ENCODE measurements at regions of chr11 and their contacts with region 1.

Region 1: DNA sequence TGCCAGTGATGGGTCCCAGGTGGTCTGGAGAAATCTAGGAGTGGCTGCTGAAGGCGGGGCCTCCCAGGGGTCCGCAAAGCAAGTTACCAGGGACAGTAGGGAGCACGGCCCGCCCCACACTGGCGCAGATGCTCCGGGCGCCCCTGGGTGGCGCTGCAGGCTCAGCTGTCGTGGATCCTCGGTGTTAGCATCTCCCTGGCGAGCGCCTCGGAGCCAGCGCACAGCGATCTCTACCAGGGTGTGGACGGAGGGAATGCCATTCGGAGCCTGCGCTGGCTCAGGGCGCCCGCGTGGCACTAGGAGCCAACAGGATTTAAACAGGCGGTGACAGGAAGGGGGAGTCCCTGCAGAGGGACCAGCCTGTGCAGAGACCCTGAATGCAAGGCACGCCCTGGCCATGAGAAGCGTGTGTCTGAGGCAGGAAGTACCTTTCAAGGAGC is 20.2 kb downstream of the FADS3 start:
- DNase-seq: peak; percentile 68
- H3K4me3 ChIP-seq: no peak overlapping the region
- H3K27ac ChIP-seq: no peak overlapping the region
- H3K4me1 ChIP-seq: peaks cover 10% of the 10 kb centered on the region
- H3K27me3 ChIP-seq: no peaks in the 10 kb centered on the region
- CTCF ChIP-seq: peak; percentile 82 to 95

Region 2: DNA sequence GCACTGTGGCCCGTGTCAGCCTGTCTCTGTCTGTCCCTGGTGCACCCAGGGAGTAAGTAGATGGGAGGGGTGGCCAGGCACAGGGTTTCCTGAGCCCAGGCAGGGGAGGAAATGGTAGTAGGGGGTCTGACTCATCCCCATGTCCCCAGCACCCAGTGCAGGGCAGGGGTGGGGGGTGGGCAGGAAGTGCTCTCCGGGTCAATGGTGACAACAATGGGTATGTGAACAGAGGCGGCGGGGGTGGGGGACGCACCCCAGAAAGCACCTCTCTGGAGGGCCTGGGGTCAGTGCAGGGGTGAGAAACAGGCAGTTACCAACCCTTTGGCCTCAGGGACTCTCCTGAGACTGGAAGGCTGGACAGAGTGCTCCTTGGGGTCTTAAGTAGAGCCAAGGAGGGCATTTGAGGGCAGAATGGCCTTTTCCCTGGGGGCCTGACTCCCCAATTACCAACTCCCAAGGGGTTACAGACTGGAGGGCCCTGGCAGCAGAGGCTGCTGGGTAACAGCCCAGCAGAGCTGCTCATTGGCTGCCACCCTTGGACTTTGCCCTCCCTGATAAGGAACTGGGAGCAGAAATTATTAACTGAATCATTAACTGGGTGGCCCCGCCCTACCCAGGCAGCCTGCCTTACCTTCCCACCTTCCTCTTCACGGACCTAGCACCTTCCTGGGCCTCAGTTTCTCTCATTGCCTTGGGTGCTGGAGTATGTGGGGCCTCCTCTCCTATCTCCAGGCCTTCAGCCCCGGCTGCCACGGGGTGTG is 114.5 kb before region 1 on chr11:
- CTCF ChIA-PET with region 1: no interaction called
- dilution Hi-C with region 1: no loop called
- in situ Hi-C with region 1: no loop called
- intact Hi-C with region 1: no loop called
- DNase-seq: no peak
- H3K4me3 ChIP-seq: no peak overlapping the region
- H3K27ac ChIP-seq: no peak overlapping the region
- H3K4me1 ChIP-seq: no peaks in the 10 kb centered on the region
- H3K27me3 ChIP-seq: peaks cover 3% of the 10 kb centered on the region
- CTCF ChIP-seq: no peak

Region 3: GRCh38 chr11:61891331-61892084 is 20.3 kb after region 1 on chr11 and contains the start of gene FADS3:
- CTCF ChIA-PET with region 1: no interaction called
- dilution Hi-C with region 1: no loop called
- in situ Hi-C with region 1: no loop called
- intact Hi-C with region 1: loop called (anchors 2 kb)
- DNase-seq: peak; percentile 80
- H3K4me3 ChIP-seq: peak within 1 kb of the TSS; percentile 63 to 100 (median 75)
- H3K27ac ChIP-seq: no peak within 1 kb of the TSS
- H3K4me1 ChIP-seq: peaks cover 30% of the 10 kb centered on the region
- H3K27me3 ChIP-seq: no peaks in the 10 kb centered on the region
- CTCF ChIP-seq: no peak
- total RNA-seq, gene FADS3: 149 to 429 TPM

Region 4: DNA sequence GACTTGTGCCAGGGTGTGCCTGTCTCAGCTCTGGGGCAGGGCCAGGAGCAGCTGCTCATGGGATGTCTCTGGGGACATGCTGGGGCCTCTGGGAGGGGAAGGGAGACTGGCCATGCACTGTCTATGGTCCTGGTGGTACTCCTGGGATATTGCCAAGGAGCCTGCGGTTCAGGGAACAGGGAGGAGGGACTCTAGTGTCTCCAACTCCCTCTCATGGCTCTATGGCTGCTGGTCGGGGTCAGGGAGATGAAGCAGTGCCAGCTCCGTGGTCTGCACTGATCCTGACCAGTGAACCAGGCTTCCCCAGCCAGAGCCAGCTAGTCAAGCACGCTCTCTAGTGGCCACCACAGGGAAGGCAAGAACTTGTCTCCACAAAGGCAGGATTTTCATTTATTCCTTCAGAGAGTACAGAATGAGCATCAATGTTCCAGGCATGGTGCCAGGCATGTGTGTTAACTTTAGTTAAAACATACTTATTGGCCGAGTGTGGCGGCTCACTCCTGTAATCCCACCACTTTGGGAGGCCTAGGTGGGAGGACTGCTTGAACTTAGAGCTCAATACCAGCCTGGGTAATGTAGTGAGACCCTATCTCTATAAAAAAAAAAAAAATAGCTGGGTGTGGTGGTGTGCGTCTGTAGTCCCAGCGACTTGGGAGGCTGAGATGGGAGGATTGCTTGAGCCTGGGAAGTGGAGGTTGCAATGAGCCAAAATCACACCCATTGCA is 76.5 kb after region 1 on chr11:
- CTCF ChIA-PET with region 1: interaction called, 7 read pairs
- dilution Hi-C with region 1: no loop called
- in situ Hi-C with region 1: no loop called
- intact Hi-C with region 1: loop called (anchors 1 kb)
- DNase-seq: peak; percentile 59
- H3K4me3 ChIP-seq: no peak overlapping the region
- H3K27ac ChIP-seq: no peak overlapping the region
- H3K4me1 ChIP-seq: no peaks in the 10 kb centered on the region
- H3K27me3 ChIP-seq: no peaks in the 10 kb centered on the region
- CTCF ChIP-seq: peak; percentile 97 to 98

Region 5: GRCh38 chr11:62061351-62062222 is 190.4 kb after region 1 on chr11:
- CTCF ChIA-PET with region 1: no interaction called
- dilution Hi-C with region 1: no loop called
- in situ Hi-C with region 1: loop called in 1 of 2 experiments (anchors 10 kb)
- intact Hi-C with region 1: no loop called
- DNase-seq: peak; percentile 29
- H3K4me3 ChIP-seq: no peak overlapping the region
- H3K27ac ChIP-seq: no peak overlapping the region
- H3K4me1 ChIP-seq: no peaks in the 10 kb centered on the region
- H3K27me3 ChIP-seq: no peaks in the 10 kb centered on the region
- CTCF ChIP-seq: peak; percentile 36 to 51

Region 6: GRCh38 chr11:62108017-62108750 is 237.0 kb after region 1 on chr11:
- CTCF ChIA-PET with region 1: interaction called, 8 read pairs
- dilution Hi-C with region 1: no loop called
- in situ Hi-C with region 1: no loop called
- intact Hi-C with region 1: loop called (anchors 1 kb)
- DNase-seq: peak; percentile 42
- H3K4me3 ChIP-seq: no peak overlapping the region
- H3K27ac ChIP-seq: no peak overlapping the region
- H3K4me1 ChIP-seq: peaks cover 7% of the 10 kb centered on the region
- H3K27me3 ChIP-seq: no peaks in the 10 kb centered on the region
- CTCF ChIP-seq: peak; percentile 76 to 77